ENCODE measurements at regions of chr1 and their contacts with region 1.

Region 1: GRCh38 chr1:161098210-161099068 is at the start of gene KLHDC9:
- DNase-seq: peak; percentile 85
- H3K4me3 Mint-ChIP-seq: peak within 1 kb of the TSS; percentile 81
- H3K27ac Mint-ChIP-seq: peak within 1 kb of the TSS; percentile 89
- H3K4me1 Mint-ChIP-seq: peaks cover 26% of the 10 kb centered on the region
- H3K27me3 Mint-ChIP-seq: peaks cover 41% of the 10 kb centered on the region

Region 2: GRCh38 chr1:160904783-160905616 is 193.4 kb before region 1 on chr1:
- CTCF ChIA-PET with region 1: no interaction called
- DNase-seq: no peak
- H3K4me3 Mint-ChIP-seq: no peak overlapping the region
- H3K27ac Mint-ChIP-seq: no peak overlapping the region
- H3K4me1 Mint-ChIP-seq: no peaks in the 10 kb centered on the region
- H3K27me3 Mint-ChIP-seq: peaks cover 10% of the 10 kb centered on the region

Region 3: DNA sequence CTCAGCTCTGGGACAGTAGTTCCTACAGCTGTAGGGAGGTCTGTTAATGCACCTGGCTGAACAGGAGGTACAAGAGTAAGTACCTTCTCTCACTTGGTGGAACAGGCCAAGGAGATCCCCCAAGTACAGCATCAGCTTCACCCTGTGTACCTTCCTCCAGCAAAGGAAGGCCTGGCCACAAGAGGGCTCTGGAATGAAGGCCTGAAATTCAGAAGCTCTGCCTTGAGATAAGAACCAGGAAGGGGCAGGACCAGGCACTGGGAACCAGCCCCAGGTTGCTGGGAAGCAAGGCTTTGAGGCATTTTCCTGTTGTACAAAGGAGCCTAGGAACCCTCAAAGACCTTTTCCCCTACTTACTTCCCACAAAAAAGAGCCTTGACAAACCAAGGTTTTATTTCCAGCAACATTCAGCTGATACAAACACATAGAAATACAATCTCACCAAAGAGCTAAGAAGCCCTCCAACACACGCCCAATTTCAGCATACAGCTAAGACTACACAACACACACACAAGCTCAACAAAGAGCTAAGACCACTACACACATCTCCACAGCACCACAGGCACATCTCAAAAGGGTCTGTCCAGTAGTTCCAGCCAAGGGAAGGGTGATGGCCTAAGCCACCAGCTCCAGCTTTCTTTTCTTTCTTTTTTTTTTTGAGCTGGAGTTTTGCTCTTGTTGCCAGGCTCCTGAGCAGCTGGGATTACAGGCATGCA is 101.0 kb before region 1 on chr1:
- CTCF ChIA-PET with region 1: interaction called, 78 read pairs
- DNase-seq: peak; percentile 67
- H3K4me3 Mint-ChIP-seq: no peak overlapping the region
- H3K27ac Mint-ChIP-seq: peak overlapping the region; percentile 12
- H3K4me1 Mint-ChIP-seq: peaks cover 5% of the 10 kb centered on the region
- H3K27me3 Mint-ChIP-seq: no peaks in the 10 kb centered on the region

Region 4: GRCh38 chr1:161045750-161046571 is 52.5 kb before region 1 on chr1 and contains the start of gene USF1:
- CTCF ChIA-PET with region 1: interaction called, 65 read pairs
- DNase-seq: peak; percentile 94
- H3K4me3 Mint-ChIP-seq: peak within 1 kb of the TSS; percentile 86
- H3K27ac Mint-ChIP-seq: peak within 1 kb of the TSS; percentile 97
- H3K4me1 Mint-ChIP-seq: peaks cover 57% of the 10 kb centered on the region
- H3K27me3 Mint-ChIP-seq: no peaks in the 10 kb centered on the region

Region 5: DNA sequence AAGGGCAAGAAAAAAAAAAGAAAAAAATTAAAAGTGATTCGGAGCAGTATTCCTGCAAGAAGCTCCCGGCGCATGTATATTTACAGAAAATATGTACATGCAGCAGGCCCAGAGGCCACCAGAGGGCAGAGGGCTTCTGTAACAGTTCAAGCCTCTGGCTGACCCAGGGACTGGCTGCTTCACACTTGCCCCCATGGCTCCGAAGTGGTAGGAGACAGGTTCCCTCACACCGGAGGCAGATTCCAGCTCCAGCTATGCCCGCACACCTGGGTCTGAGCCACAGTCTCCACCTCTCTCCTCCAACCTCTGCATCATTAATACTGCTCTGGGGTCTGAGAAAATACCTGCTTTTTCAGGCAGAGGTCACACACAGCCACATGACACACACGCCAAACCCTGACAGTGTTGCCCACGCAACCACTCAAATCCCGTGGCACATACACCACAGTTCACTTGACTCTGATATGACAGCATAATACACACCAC is 26.5 kb before region 1 on chr1:
- CTCF ChIA-PET with region 1: interaction called, 196 read pairs
- DNase-seq: peak; percentile 74
- H3K4me3 Mint-ChIP-seq: no peak overlapping the region
- H3K27ac Mint-ChIP-seq: peak overlapping the region; percentile 16
- H3K4me1 Mint-ChIP-seq: peaks cover 49% of the 10 kb centered on the region
- H3K27me3 Mint-ChIP-seq: peaks cover 4% of the 10 kb centered on the region

Region 6: GRCh38 chr1:161139765-161140164 is 41.3 kb after region 1 on chr1:
- CTCF ChIA-PET with region 1: interaction called, 12 read pairs
- DNase-seq: peak; percentile 63
- H3K4me3 Mint-ChIP-seq: no peak overlapping the region
- H3K27ac Mint-ChIP-seq: no peak overlapping the region
- H3K4me1 Mint-ChIP-seq: peaks cover 10% of the 10 kb centered on the region
- H3K27me3 Mint-ChIP-seq: no peaks in the 10 kb centered on the region

Region 7: DNA sequence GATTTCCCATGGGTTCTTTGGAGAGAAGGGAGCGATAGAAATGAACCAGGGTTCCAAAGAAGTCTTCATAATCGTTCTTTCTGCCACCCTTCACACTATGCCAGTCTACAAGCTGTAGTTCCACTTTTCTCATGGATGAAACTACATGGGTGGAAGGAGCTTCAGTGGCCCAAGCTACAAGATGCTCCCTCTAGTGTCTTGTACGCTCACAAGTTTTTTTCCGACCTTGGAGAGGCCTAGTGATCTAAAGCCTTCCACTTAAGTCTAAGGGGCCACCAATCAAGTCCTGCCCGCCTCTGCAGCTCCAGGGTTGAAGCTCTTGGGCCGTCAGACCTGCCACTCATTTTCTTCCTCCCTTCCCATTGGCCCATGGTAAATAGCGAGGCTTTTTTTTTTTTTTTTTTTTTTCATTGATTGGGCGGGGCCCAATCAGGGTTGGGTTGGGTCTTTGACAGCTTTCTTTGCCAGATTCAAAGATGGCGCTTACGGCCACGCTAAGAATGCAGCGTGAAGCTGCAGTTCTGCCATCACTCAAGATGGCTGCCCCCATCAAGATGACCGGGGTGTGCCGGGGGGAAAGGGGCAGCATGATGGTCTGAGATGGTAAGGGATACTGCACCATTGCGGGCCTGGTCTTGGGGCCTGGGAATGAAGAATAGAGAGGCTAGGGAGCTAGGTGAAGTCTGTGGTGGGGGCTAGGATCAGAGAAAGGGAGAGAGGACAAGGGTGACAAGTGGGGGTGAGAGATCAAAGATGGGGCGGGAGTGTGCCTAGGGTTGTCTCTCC is 127.3 kb after region 1 on chr1 and contains the start of gene TOMM40L:
- CTCF ChIA-PET with region 1: no interaction called
- DNase-seq: peak; percentile 94
- H3K4me3 Mint-ChIP-seq: peak within 1 kb of the TSS; percentile 89
- H3K27ac Mint-ChIP-seq: peak within 1 kb of the TSS; percentile 89
- H3K4me1 Mint-ChIP-seq: peaks cover 45% of the 10 kb centered on the region
- H3K27me3 Mint-ChIP-seq: no peaks in the 10 kb centered on the region

Region 8: GRCh38 chr1:161389691-161390558 is 291.5 kb after region 1 on chr1:
- CTCF ChIA-PET with region 1: no interaction called
- DNase-seq: peak; percentile 98
- H3K4me3 Mint-ChIP-seq: peak overlapping the region; percentile 89
- H3K27ac Mint-ChIP-seq: peak overlapping the region; percentile 95
- H3K4me1 Mint-ChIP-seq: peaks cover 50% of the 10 kb centered on the region
- H3K27me3 Mint-ChIP-seq: peaks cover 4% of the 10 kb centered on the region

Measured in activated naive CD4-positive, alpha-beta T cell treated with anti-CD3 and anti-CD28 coated beads, Interleukin-2, amount 10 ng/mL, durations not matched to agents 7 days and 5 days (primary cell).